ENCODE measurements at regions of chr17 and their contacts with region 1.

Region 1: GRCh38 chr17:60392042-60392844 is at the start of gene USP32:
- DNase-seq: peak; percentile 98 to 99
- ATAC-seq: peak; percentile 84 to 85
- H3K4me3 ChIP-seq: peak within 1 kb of the TSS; percentile 74 to 94 (median 90)
- H3K27ac ChIP-seq: peak within 1 kb of the TSS; percentile 96 to 99 (median 98)
- H3K4me1 ChIP-seq: peaks cover 41% of the 10 kb centered on the region in 2 donors
- H3K27me3 ChIP-seq: no peaks in the 10 kb centered on the region
- CTCF ChIP-seq: peak in 4 of 5 experiments; percentile 13 to 51 (median 30)
- POLR2A ChIP-seq: peak; percentile 85 to 90
- total RNA-seq, gene USP32: 44.4 to 83.2 (median 52.5) TPM

Region 2: DNA sequence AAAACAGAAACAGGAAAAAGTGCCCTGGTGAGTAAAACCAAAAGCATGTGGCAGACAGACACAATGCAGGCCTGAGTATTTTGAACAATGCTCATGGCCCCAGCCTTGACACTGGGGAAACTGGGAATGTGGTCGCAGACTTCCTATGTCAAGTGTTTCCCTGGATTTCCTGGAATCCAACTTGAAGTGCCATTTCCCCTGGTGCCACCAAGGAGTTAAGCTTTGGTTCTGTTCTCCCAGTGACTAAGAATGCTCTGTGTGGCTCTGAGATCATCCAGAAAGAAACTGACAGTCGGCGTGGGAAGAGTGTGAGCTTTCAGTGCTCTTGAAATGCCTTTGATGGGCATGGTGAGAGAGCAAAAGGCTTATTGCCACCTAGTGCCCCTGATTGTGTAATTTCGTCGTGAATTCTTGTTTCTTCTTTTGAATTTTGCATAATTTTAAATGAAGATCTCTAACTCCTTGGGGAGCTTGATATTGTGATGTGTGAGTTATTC is 964.8 kb before region 1 on chr17:
- in situ Hi-C with region 1: no loop called
- intact Hi-C with region 1: loop called (anchors 10 kb)
- DNase-seq: no peak
- ATAC-seq: peak in 1 of 2 donors; percentile 9
- H3K4me3 ChIP-seq: no peak overlapping the region
- H3K27ac ChIP-seq: peak overlapping the region; percentile 91 to 98 (median 95)
- H3K4me1 ChIP-seq: peaks cover 62 to 71% of the 10 kb centered on the region in 2 donors
- H3K27me3 ChIP-seq: no peaks in the 10 kb centered on the region
- CTCF ChIP-seq: no peak
- POLR2A ChIP-seq: no peak

Region 3: DNA sequence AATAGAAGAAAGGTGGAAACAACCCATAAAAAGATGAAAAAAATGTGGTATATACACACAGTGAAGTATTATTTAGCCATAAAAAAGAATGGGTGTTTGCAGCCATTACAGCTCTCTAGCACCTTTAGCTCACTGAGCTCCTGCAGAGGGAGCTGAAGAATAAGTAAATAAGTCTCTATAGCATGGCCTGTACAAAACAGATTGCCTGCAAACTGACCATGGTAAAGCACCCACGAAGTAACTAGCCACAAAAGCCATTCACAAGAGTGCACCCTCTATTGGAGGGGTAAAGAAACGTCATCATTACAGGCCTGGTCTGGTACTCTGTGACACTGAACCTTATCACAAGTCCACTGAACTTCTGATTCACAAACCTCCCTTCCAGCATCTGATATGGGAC is 76.6 kb before region 1 on chr17:
- in situ Hi-C with region 1: no loop called
- intact Hi-C with region 1: loop called (anchors 5 kb)
- DNase-seq: no peak
- ATAC-seq: no peak
- H3K4me3 ChIP-seq: no peak overlapping the region
- H3K27ac ChIP-seq: no peak overlapping the region
- H3K4me1 ChIP-seq: peaks cover 14 to 21% of the 10 kb centered on the region in 2 donors
- H3K27me3 ChIP-seq: no peaks in the 10 kb centered on the region
- CTCF ChIP-seq: no peak
- POLR2A ChIP-seq: no peak

Region 4: GRCh38 chr17:60677308-60678124 is 285.3 kb after region 1 on chr17 and contains the start of gene BCAS3:
- in situ Hi-C with region 1: no loop called
- intact Hi-C with region 1: loop called (anchors 1 kb)
- DNase-seq: peak; percentile 99
- ATAC-seq: peak; percentile 96 to 98
- H3K4me3 ChIP-seq: peak within 1 kb of the TSS; percentile 58 to 91 (median 87)
- H3K27ac ChIP-seq: peak within 1 kb of the TSS; percentile 85 to 92 (median 90)
- H3K4me1 ChIP-seq: peaks cover 6 to 8% of the 10 kb centered on the region in 2 donors
- H3K27me3 ChIP-seq: no peaks in the 10 kb centered on the region
- CTCF ChIP-seq: no peak
- POLR2A ChIP-seq: peak; percentile 83 to 95
- total RNA-seq, gene BCAS3: 18.2 to 60.6 (median 23.4) TPM

Measured in gastrocnemius medialis (tissue), 4 donors.